WTC11 (cell line): ENCODE measurements at regions of chr3 and their contacts with region 1.

Region 1: GRCh38 chr3:129160891-129161859 is at the start of gene ISY1:
- DNase-seq: peak; percentile 86
- ATAC-seq: peak; percentile 72
- H3K4me3 Mint-ChIP-seq: peak within 1 kb of the TSS; percentile 98
- H3K27ac Mint-ChIP-seq: peak within 1 kb of the TSS; percentile 100
- H3K4me1 Mint-ChIP-seq: peaks cover 13% of the 10 kb centered on the region
- H3K27me3 Mint-ChIP-seq: no peaks in the 10 kb centered on the region
- CTCF ChIP-seq: peak; percentile 65
- total RNA-seq, gene ISY1: 21.4 to 25.0 TPM (median 21.5 TPM) in 3 replicates

Region 2: GRCh38 chr3:129058441-129059200 is 102.6 kb before region 1 on chr3:
- CTCF ChIA-PET with region 1: interaction called, 22 read pairs
- POLR2A ChIA-PET with region 1: no interaction called
- DNase-seq: no peak
- ATAC-seq: no peak
- H3K4me3 Mint-ChIP-seq: no peak overlapping the region
- H3K27ac Mint-ChIP-seq: no peak overlapping the region
- H3K4me1 Mint-ChIP-seq: no peaks in the 10 kb centered on the region
- H3K27me3 Mint-ChIP-seq: peaks cover 5% of the 10 kb centered on the region
- CTCF ChIP-seq: no peak

Region 3: DNA sequence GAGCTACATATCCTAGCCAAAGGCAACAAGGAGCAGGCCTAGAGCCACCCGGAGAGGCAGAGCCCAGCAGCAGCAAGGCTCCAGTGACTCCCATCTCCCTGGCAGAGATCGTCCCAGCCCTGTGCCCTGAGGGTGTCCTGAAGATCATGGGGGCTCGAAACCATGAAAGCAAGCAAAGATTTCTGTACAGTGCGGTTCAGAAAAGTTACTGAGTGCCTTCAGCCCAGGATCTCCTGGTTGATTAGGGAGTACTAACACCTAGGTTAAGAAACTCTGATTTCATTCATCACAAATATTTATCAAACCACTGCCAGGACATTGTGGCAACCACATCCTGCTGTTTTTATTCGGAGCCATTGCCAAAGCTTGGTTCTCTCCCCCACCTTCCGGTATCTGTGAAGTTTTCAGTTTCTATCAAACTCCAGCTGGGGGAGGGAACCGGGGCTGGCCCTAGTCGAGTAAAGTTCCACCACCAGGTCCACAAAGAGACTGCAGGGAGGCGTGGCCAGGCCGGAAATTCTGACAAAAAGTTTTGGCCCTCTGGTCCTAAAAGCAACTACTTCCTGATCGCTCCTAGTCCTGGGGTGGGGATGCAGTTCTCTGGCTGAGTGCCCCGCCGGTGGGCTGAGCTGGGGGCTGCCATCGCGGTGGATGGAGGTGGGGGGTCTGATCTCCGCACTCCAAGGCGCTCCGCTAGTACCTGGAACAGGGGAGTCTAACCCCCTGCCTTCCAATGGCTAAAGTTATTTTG is 40.7 kb before region 1 on chr3:
- CTCF ChIA-PET with region 1: interaction called, 28 read pairs
- POLR2A ChIA-PET with region 1: interaction called, 17 read pairs
- DNase-seq: peak; percentile 85
- ATAC-seq: peak; percentile 3
- H3K4me3 Mint-ChIP-seq: peak overlapping the region; percentile 83
- H3K27ac Mint-ChIP-seq: peak overlapping the region; percentile 99
- H3K4me1 Mint-ChIP-seq: peaks cover 56% of the 10 kb centered on the region
- H3K27me3 Mint-ChIP-seq: peaks cover 4% of the 10 kb centered on the region; the same call in 1 of the 2 replicates
- CTCF ChIP-seq: no peak

Region 4: GRCh38 chr3:129183569-129184395 is 22.6 kb after region 1 on chr3 and contains the start of gene CNBP:
- CTCF ChIA-PET with region 1: interaction called, 13 read pairs
- POLR2A ChIA-PET with region 1: interaction called, 5 read pairs
- DNase-seq: peak; percentile 87
- ATAC-seq: peak; percentile 95
- H3K4me3 Mint-ChIP-seq: peak within 1 kb of the TSS; percentile 89
- H3K27ac Mint-ChIP-seq: peak within 1 kb of the TSS; percentile 94
- H3K4me1 Mint-ChIP-seq: peaks cover 28% of the 10 kb centered on the region
- H3K27me3 Mint-ChIP-seq: no peaks in the 10 kb centered on the region
- CTCF ChIP-seq: no peak
- total RNA-seq, gene CNBP: 329 to 390 TPM (median 380 TPM) in 3 replicates

Region 5: DNA sequence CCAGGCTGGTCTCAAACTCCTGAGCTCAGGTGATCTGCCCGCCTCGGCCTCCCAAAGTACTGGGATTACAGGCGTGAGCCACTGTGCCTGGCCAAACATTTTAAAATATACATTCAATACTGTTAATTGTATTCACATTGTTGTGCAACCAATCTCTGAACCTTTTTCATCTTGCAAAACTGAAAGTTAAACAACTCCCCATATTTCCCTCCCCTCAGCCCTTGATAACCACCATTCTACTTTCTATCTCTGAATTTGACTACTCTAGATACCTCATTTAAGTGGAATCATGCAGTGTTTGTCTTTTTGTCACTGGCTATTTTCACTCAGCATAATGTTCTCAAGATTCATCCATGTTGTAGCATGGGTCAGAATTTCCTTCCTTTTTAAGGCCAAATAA is 147.5 kb after region 1 on chr3:
- CTCF ChIA-PET with region 1: no interaction called
- POLR2A ChIA-PET with region 1: no interaction called
- DNase-seq: no peak
- ATAC-seq: no peak
- H3K4me3 Mint-ChIP-seq: no peak overlapping the region
- H3K27ac Mint-ChIP-seq: peak overlapping the region; percentile 1; the same call in 1 of the 2 replicates
- H3K4me1 Mint-ChIP-seq: peaks cover 28% of the 10 kb centered on the region
- H3K27me3 Mint-ChIP-seq: no peaks in the 10 kb centered on the region
- CTCF ChIP-seq: no peak

Region 6: DNA sequence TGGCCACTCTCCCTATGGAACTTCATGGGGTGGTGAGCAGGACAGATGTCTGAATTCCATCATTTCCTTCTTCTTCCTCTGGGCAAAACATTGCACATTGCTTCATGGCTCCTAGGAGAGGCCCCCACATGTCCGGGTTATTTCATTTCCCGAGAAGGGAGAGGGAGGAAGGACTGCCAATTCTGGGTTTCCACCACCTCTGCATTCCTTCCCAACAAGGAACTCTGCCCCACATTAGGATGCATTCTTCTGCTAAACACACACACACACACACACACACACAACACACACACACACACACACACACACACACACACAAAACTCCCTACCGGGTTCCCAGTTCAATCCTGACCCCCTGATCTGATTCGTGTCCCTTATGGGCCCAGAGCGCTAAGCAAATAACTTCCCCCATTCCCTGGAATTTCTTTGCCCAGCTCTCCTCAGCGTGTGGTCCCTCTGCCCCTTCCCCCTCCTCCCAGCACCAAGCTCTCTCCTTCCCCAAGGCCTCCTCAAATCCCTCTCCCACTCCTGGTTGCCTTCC is 369.1 kb after region 1 on chr3:
- CTCF ChIA-PET with region 1: no interaction called
- POLR2A ChIA-PET with region 1: no interaction called
- DNase-seq: peak; percentile 36
- ATAC-seq: peak; percentile 67
- H3K4me3 Mint-ChIP-seq: no peak overlapping the region
- H3K27ac Mint-ChIP-seq: no peak overlapping the region
- H3K4me1 Mint-ChIP-seq: peaks cover 36% of the 10 kb centered on the region
- H3K27me3 Mint-ChIP-seq: no peaks in the 10 kb centered on the region
- CTCF ChIP-seq: no peak